Upper lobe of right lung (tissue), 1 donor: ENCODE measurements at regions of chr7 and their contacts with region 1.

Region 1: DNA sequence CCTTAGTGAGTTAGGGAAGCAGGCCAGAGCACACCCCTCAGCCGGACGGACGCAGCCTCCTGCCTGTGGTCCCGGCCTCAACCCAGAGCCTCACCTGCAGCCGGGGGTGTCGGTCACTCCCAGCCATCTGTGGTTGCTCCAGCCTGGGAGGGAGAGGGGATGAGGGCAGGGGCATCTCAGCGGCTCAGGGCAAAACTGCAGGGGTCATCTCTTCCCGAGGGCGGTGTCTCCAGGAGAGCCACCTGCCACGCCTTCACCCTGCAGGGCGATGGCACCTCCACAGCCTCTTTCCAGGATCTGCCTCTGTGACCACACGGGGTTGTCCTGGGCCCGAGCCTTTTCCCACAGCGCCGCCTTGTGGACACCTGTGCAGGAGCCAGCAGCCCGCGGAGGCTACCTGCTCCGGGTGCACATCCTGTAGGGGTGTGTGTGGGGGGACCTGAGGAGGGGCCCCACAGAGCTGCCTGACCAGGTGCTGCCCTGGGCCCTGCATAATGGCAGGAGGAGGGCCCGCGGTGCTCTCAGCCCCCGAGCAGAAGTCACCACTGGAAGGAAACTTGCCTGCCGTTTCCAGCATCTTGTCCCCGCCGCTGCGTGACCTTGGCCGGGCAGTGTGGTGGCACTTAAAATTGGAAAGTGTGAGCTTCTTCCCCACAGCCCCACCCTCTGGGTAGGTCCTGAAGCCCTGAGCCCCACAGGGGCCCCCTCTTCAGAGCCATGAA is 21.6 kb upstream of the AP5Z1 start:
- DNase-seq: peak; percentile 91
- ATAC-seq: peak; percentile 94
- H3K4me3 ChIP-seq: no peak overlapping the region
- H3K27ac ChIP-seq: no peak overlapping the region
- H3K4me1 ChIP-seq: peaks cover 8% of the 10 kb centered on the region
- H3K27me3 ChIP-seq: no peaks in the 10 kb centered on the region
- CTCF ChIP-seq: peak; percentile 89

Region 2: GRCh38 chr7:4610768-4611467 is 143.0 kb before region 1 on chr7:
- intact Hi-C with region 1: loop called (anchors 10 kb)
- DNase-seq: no peak
- ATAC-seq: peak; percentile 93
- H3K4me3 ChIP-seq: no peak overlapping the region
- H3K27ac ChIP-seq: no peak overlapping the region
- H3K4me1 ChIP-seq: peaks cover 8% of the 10 kb centered on the region
- H3K27me3 ChIP-seq: no peaks in the 10 kb centered on the region
- CTCF ChIP-seq: peak; percentile 83